H1 (cell line): ENCODE measurements at regions of chr1 and their contacts with region 1.

Region 1: GRCh38 chr1:110780600-110781484 is 92.1 kb upstream of the CD53 start:
- DNase-seq: peak; percentile 43 to 83
- H3K4me3 ChIP-seq: peak overlapping the region; percentile 11 to 61 (median 32); a peak in 7 of 8 replicates
- H3K27ac ChIP-seq: no peak overlapping the region
- H3K4me1 ChIP-seq: peaks cover 0 to 2% (median 0%) of the 10 kb centered on the region in 4 experiments; a peak in 1 of 7 replicates
- H3K27me3 ChIP-seq: peaks cover 0 to 5% (median 1%) of the 10 kb centered on the region in 4 experiments; a peak in 4 of 7 replicates
- CTCF ChIP-seq: peak; percentile 81 to 91 (median 88)
- EP300 ChIP-seq: no peak
- POLR2A ChIP-seq: no peak
- RAD21 ChIP-seq: peak; percentile 90 to 92

Region 2: GRCh38 chr1:110630839-110631663 is 149.8 kb before region 1 on chr1:
- CTCF ChIA-PET with region 1: interaction called, 86 read pairs
- POLR2A ChIA-PET with region 1: no interaction called
- DNase-seq: peak; percentile 54 to 89
- H3K4me3 ChIP-seq: no peak overlapping the region
- H3K27ac ChIP-seq: no peak overlapping the region
- H3K4me1 ChIP-seq: no peaks in the 10 kb centered on the region
- H3K27me3 ChIP-seq: peaks cover 0 to 11% (median 0%) of the 10 kb centered on the region in 4 experiments; a peak in 2 of 7 replicates
- CTCF ChIP-seq: peak; percentile 85 to 93 (median 88)
- EP300 ChIP-seq: no peak
- POLR2A ChIP-seq: no peak
- RAD21 ChIP-seq: peak; percentile 83 to 86

Region 3: GRCh38 chr1:110645821-110646735 is 134.8 kb before region 1 on chr1:
- CTCF ChIA-PET with region 1: interaction called, 79 read pairs
- POLR2A ChIA-PET with region 1: no interaction called
- DNase-seq: no peak
- H3K4me3 ChIP-seq: no peak overlapping the region
- H3K27ac ChIP-seq: no peak overlapping the region
- H3K4me1 ChIP-seq: no peaks in the 10 kb centered on the region
- H3K27me3 ChIP-seq: no peaks in the 10 kb centered on the region
- CTCF ChIP-seq: no peak
- EP300 ChIP-seq: no peak
- POLR2A ChIP-seq: no peak
- RAD21 ChIP-seq: no peak

Region 4: DNA sequence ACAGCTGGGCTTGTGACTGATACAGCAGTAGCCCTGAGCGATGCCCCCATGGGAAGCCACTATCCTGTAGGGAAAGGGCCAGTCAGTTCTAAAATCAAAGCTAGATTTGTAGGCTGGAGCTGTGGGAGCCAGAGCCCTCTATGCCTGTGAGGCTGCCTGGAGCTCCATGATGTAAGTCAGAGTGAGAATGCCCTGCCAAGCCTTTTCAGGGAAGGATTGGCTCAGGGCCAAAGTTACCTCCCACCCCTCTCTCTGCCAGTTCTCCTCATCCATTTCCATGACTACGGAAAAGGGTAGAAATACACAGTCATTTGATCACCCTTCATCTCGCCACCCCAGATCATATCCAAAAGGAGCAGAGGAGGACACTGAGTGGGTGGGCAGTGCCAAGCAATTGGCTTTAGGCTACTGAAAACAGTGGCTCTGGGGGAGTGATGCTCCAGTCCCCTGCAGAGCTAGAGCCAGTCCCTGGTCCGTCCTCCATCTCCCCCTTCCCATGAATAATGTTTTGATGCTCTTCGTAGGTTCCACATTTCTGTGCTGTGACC is 46.6 kb before region 1 on chr1:
- CTCF ChIA-PET with region 1: interaction called, 34 read pairs
- POLR2A ChIA-PET with region 1: no interaction called
- DNase-seq: no peak
- H3K4me3 ChIP-seq: no peak overlapping the region
- H3K27ac ChIP-seq: no peak overlapping the region
- H3K4me1 ChIP-seq: 0 out of 7 replicates have a peak, but pooled peaks cover 0 to 3% (median 0%) of the 10 kb centered on the region in 4 experiments
- H3K27me3 ChIP-seq: no peaks in the 10 kb centered on the region
- CTCF ChIP-seq: no peak
- EP300 ChIP-seq: no peak
- POLR2A ChIP-seq: no peak
- RAD21 ChIP-seq: no peak

Region 5: GRCh38 chr1:110798691-110799256 is 17.9 kb after region 1 on chr1:
- CTCF ChIA-PET with region 1: interaction called, 23 read pairs
- POLR2A ChIA-PET with region 1: no interaction called
- DNase-seq: no peak
- H3K4me3 ChIP-seq: no peak overlapping the region
- H3K27ac ChIP-seq: no peak overlapping the region
- H3K4me1 ChIP-seq: no peaks in the 10 kb centered on the region
- H3K27me3 ChIP-seq: no peaks in the 10 kb centered on the region; a peak in 1 of 7 replicates
- CTCF ChIP-seq: no peak
- EP300 ChIP-seq: no peak
- POLR2A ChIP-seq: no peak
- RAD21 ChIP-seq: no peak

Region 6: DNA sequence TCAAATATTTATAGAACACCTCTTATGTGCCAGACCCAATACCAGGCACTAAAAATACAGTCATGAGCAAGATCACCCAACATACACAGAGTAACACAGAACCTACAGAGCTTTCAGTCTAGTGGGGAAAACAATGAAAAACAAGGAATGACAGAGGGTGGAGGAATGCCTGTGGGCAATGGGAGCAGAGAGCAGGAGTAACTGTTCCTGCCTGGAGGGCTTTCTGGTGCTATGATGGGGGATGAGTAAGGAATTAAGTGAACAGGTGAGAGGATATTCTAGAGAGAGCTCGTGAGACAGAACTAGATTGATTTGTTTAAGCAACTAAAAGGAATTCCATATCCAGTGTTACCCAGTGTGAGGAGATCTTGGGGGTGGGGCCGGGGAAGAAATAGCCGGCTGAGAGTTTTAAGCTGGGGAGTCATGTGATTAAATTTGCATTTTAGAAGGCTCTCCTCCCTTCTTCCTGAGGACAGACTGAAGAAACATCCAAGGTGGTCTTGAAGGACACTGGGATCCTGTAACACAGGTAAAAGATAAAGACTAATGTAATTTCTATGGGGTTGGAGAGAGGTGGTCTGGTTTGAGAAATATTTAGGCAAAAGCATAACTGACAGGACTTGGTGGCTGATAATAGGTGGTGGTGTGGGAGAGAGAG is 90.0 kb after region 1 on chr1:
- CTCF ChIA-PET with region 1: no interaction called
- POLR2A ChIA-PET with region 1: no interaction called
- DNase-seq: no peak
- H3K4me3 ChIP-seq: no peak overlapping the region
- H3K27ac ChIP-seq: no peak overlapping the region
- H3K4me1 ChIP-seq: no peaks in the 10 kb centered on the region
- H3K27me3 ChIP-seq: no peaks in the 10 kb centered on the region
- CTCF ChIP-seq: no peak
- EP300 ChIP-seq: no peak
- POLR2A ChIP-seq: no peak
- RAD21 ChIP-seq: no peak

Region 7: DNA sequence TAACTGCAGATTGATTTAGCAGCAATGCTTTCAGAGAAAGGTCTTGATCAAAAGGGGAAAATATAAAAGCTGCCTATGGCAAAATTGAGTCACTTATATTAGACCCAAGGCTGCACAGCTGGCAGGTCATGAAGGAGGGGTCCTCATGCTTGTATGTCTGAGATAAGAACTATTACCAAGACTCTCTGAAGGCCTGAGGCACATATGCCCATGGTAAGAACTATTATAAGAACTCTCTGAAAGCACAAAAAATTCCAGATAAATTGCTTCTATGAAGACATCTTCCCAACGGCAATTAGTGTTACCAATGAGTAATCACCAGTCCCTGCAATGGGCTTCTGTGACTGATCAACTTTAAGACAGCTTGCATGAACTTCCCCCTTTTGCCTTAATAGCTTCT is 225.7 kb after region 1 on chr1:
- CTCF ChIA-PET with region 1: no interaction called
- POLR2A ChIA-PET with region 1: no interaction called
- DNase-seq: no peak
- H3K4me3 ChIP-seq: no peak overlapping the region
- H3K27ac ChIP-seq: no peak overlapping the region
- H3K4me1 ChIP-seq: no peaks in the 10 kb centered on the region
- H3K27me3 ChIP-seq: no peaks in the 10 kb centered on the region
- CTCF ChIP-seq: no peak
- EP300 ChIP-seq: no peak
- POLR2A ChIP-seq: no peak
- RAD21 ChIP-seq: no peak